Heart right ventricle (tissue), 16 donors: ENCODE measurements at regions of chr9 and their contacts with region 1.

Region 1: GRCh38 chr9:91089405-91090129 is 272.2 kb downstream of the AUH start:
- DNase-seq: peak in 1 of 2 donors; percentile 21
- ATAC-seq: peak; percentile 65 to 85 (median 80)
- H3K4me3 ChIP-seq: no peak overlapping the region
- H3K27ac ChIP-seq: no peak overlapping the region
- H3K4me1 ChIP-seq: peaks cover 0 to 17% (median 0%) of the 10 kb centered on the region in 9 donors
- H3K27me3 ChIP-seq: no peaks in the 10 kb centered on the region
- CTCF ChIP-seq: peak in 7 of 9 donors; percentile 49 to 70 (median 60)

Region 2: DNA sequence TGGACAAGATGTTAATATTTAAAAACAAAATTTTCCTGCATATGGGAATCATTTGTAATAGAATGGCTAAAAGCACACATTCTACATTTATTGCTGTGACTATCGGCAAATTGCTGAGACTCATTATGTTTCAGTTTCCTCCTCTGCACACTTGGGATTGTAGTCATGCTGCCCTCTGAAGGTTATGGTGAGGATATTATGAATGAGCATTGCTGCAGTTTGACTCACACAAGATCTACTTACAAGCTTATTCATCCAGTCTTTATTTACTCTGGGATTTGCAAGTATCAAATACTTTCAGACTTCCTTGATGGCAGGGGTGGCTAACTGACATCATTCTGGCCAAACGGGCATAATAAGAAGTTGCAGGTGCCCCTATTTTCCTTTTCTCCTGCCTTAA is 343.6 kb after region 1 on chr9:
- intact Hi-C with region 1: loop called in 7 of 10 experiments (anchors 2 to 10 kb)
- DNase-seq: no peak
- ATAC-seq: peak in 6 of 8 donors; percentile 62 to 74 (median 68)
- H3K4me3 ChIP-seq: no peak overlapping the region
- H3K27ac ChIP-seq: no peak overlapping the region
- H3K4me1 ChIP-seq: peaks cover 0 to 20% (median 0%) of the 10 kb centered on the region in 9 donors
- H3K27me3 ChIP-seq: no peaks in the 10 kb centered on the region
- CTCF ChIP-seq: peak in 8 of 9 donors; percentile 19 to 70 (median 58)